ENCODE measurements at regions of chr17 and their contacts with region 1.

Region 1: GRCh38 chr17:46061435-46061834 is 62.4 kb downstream of the STH start:
- DNase-seq: peak; percentile 49
- H3K4me3 ChIP-seq: no peak overlapping the region
- H3K27ac ChIP-seq: no peak overlapping the region
- H3K4me1 ChIP-seq: peaks cover 19% of the 10 kb centered on the region
- H3K27me3 ChIP-seq: no peaks in the 10 kb centered on the region
- CTCF ChIP-seq: no peak
- POLR2A ChIP-seq: no peak

Region 2: GRCh38 chr17:46089389-46089965 is 28.0 kb after region 1 on chr17:
- CTCF ChIA-PET with region 1: no interaction called
- POLR2A ChIA-PET with region 1: no interaction called
- dilution Hi-C with region 1: no loop called
- intact Hi-C with region 1: no loop called
- DNase-seq: no peak
- H3K4me3 ChIP-seq: no peak overlapping the region
- H3K27ac ChIP-seq: no peak overlapping the region
- H3K4me1 ChIP-seq: no peaks in the 10 kb centered on the region
- H3K27me3 ChIP-seq: no peaks in the 10 kb centered on the region
- CTCF ChIP-seq: no peak
- POLR2A ChIP-seq: no peak

Region 3: GRCh38 chr17:46108550-46109110 is 47.2 kb after region 1 on chr17:
- CTCF ChIA-PET with region 1: interaction called, 6 read pairs
- POLR2A ChIA-PET with region 1: no interaction called
- dilution Hi-C with region 1: no loop called
- intact Hi-C with region 1: loop called (anchors 5 kb)
- DNase-seq: peak; percentile 65
- H3K4me3 ChIP-seq: peak overlapping the region in 1 of 3 experiments; percentile 10
- H3K27ac ChIP-seq: peak overlapping the region; percentile 7
- H3K4me1 ChIP-seq: peaks cover 41% of the 10 kb centered on the region
- H3K27me3 ChIP-seq: no peaks in the 10 kb centered on the region
- CTCF ChIP-seq: no peak
- POLR2A ChIP-seq: no peak

Region 4: DNA sequence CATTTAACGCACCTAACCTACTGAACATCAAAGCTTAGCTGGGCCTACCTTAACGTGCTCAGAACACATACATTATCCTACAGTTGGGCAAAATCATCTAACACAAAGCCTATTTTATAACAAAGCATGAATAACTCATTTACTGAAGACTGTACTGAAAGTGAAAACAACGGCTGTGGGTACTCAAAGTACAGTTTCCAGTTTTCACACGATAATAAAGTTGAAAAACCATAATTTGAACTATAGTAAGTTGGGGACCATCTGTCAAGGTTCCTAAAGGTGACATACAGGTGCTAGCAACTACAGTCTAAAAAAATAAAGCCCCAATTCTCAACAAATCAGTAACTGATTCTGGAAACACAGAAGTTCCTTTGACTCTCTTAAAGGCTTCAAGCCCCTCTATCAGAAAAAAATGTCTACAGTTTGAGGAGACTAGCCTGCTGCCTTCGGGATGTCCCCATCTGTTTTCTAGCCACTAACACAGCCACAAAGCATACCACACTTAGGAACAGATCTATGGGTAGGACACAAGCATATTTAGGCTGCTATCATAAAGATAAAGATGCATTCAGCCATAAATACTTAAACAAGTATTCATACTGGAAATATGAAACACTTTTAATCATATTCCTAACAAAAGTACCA is 60.5 kb after region 1 on chr17:
- CTCF ChIA-PET with region 1: interaction called, 3 read pairs
- POLR2A ChIA-PET with region 1: interaction called, 10 read pairs
- dilution Hi-C with region 1: no loop called
- intact Hi-C with region 1: no loop called
- DNase-seq: no peak
- H3K4me3 ChIP-seq: no peak overlapping the region
- H3K27ac ChIP-seq: no peak overlapping the region
- H3K4me1 ChIP-seq: peaks cover 5% of the 10 kb centered on the region
- H3K27me3 ChIP-seq: no peaks in the 10 kb centered on the region
- CTCF ChIP-seq: no peak
- POLR2A ChIP-seq: no peak

Region 5: DNA sequence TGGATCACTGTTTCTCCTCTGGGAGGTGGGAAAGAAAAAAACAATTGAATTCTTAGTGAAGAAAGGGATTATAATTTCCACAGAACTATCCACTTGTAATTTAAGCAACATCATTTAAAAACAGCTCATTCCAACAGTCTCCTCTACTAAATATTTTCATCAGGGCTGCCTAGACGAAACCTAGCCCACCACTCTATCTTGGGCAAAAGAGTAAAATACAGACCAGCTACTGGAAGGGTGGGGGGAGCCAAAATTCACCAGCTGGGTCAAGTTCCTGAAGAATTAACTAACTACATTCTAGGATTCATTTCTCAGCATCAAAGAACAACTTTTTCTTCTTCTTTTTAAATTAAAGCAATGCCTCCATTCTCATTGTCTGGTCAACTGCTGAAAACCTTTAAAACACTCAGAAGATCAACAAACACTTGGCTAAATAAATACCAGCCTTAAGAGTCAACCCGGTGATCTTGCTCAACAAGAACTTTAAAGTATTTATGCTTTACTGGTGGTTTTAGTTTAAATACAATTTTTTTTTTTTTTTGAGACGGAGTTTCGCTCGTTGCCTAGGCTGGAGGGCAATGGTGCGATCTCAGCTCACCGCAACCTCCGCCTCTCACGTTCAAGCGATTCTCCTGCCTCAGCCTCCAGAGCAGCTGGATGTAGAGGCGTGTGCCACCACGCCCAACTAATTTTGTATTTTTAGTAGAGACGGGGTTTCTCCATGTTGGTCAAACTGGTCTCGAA is 106.6 kb after region 1 on chr17:
- CTCF ChIA-PET with region 1: no interaction called
- POLR2A ChIA-PET with region 1: interaction called, 10 read pairs
- dilution Hi-C with region 1: no loop called
- intact Hi-C with region 1: no loop called
- DNase-seq: no peak
- H3K4me3 ChIP-seq: no peak overlapping the region
- H3K27ac ChIP-seq: no peak overlapping the region
- H3K4me1 ChIP-seq: peaks cover 17% of the 10 kb centered on the region
- H3K27me3 ChIP-seq: no peaks in the 10 kb centered on the region
- CTCF ChIP-seq: no peak
- POLR2A ChIP-seq: no peak

Region 6: DNA sequence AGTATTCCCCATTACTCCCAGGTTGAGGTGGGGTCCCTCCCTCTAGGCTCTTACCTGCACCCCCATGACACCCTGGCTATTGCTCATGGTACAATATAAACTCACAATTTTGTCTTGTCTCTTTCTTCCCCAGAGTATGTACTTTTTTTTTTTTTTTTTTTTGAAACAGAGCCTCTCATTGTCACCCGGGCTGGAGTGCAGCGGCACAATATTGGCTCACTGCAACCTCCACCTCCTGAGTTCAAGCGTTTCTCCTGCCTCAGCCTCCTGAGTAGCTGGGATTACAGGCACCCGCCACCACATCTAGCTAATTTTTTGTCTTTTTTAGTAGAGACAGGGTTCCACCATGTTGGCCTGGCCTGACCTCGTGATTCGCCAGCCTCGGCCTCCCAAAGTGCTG is 123.3 kb after region 1 on chr17:
- CTCF ChIA-PET with region 1: interaction called, 19 read pairs
- POLR2A ChIA-PET with region 1: no interaction called
- dilution Hi-C with region 1: no loop called
- intact Hi-C with region 1: no loop called
- DNase-seq: no peak
- H3K4me3 ChIP-seq: no peak overlapping the region
- H3K27ac ChIP-seq: no peak overlapping the region
- H3K4me1 ChIP-seq: peaks cover 6% of the 10 kb centered on the region
- H3K27me3 ChIP-seq: no peaks in the 10 kb centered on the region
- CTCF ChIP-seq: no peak
- POLR2A ChIP-seq: no peak

Measured in endothelial cell of umbilical vein (primary cell).